CD8-positive, alpha-beta T cell (primary cell): ENCODE measurements at regions of chr4 and their contacts with region 1.

Region 1: DNA sequence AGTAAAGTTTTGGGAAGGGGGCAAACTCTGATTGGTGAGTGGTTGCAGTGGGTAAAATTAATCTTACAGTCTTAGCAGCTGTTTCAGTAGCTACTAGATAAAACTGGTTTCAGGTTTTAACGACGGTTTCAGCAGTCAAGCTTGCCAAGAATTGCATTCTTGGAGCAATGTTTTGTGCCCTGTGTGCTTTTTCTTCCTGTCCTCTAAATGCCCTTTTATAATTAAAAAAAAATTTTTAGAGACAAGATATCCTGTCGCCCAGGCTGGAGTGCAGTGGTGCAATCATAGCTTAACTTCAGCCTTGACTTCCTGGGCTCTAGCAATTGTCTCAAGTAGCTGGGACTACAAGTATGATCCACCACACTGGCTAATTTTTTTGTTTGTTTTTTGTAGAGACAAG is 6.3 kb upstream of the PPEF2 start:
- DNase-seq: no peak
- ATAC-seq: no peak
- H3K4me3 ChIP-seq: no peak overlapping the region
- H3K4me3 Mint-ChIP-seq: no peak overlapping the region
- H3K27ac ChIP-seq: no peak overlapping the region
- H3K27ac Mint-ChIP-seq: no peak overlapping the region
- H3K4me1 ChIP-seq: no peaks in the 10 kb centered on the region
- H3K4me1 Mint-ChIP-seq: no peaks in the 10 kb centered on the region
- H3K27me3 ChIP-seq: no peaks in the 10 kb centered on the region
- H3K27me3 Mint-ChIP-seq: no peaks in the 10 kb centered on the region
- CTCF ChIP-seq: no peak

Region 2: GRCh38 chr4:75895744-75896314 is 12.7 kb before region 1 on chr4:
- CTCF ChIA-PET with region 1: interaction called, 14 read pairs
- POLR2A ChIA-PET with region 1: no interaction called
- intact Hi-C with region 1: no loop called
- DNase-seq: peak in 2 of 9 experiments; percentile 57 to 68
- ATAC-seq: peak; percentile 49
- H3K4me3 ChIP-seq: no peak overlapping the region
- H3K4me3 Mint-ChIP-seq: no peak overlapping the region
- H3K27ac ChIP-seq: no peak overlapping the region
- H3K27ac Mint-ChIP-seq: no peak overlapping the region
- H3K4me1 ChIP-seq: no peaks in the 10 kb centered on the region
- H3K4me1 Mint-ChIP-seq: no peaks in the 10 kb centered on the region
- H3K27me3 ChIP-seq: no peaks in the 10 kb centered on the region
- H3K27me3 Mint-ChIP-seq: no peaks in the 10 kb centered on the region
- CTCF ChIP-seq: peak; percentile 72

Region 3: DNA sequence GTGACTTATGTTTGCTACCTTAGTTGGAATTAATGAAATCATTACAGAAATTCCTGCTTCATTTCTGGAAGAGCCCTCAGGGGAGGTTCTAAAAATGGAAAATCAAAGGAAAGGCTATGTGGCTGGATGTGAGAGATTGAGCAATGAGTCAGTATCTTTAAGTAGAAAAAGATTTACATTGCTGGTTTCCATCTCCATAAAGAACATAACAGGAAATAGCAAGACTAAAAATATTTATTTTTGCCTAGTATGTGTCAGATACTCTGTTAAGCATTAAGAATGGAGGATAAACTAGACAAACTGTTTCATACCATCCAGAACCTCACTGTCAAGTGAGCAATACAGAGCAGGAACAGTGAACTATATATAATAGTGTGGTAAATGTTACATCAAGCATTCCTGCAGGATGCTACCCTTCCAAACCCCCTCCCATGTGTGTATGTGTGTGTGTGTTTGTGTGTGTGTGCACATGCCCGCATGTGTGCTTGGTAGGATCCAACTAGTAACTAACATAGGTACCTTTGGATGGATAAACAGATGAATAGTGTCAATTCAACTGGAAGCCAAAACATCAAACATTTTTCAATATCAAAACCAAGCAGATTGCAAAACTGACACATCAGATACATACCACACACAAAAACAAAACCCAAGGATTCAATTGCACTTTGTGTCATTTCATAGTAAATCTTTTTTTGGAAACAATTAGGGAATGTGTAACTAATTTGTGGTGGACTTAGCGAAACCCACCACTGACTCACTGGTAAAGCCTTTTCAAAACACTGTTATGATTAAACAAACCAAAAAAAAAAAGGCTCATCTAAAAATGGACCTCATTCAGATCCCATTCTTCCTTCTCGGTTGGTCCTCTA is 749.9 kb after region 1 on chr4:
- CTCF ChIA-PET with region 1: no interaction called
- POLR2A ChIA-PET with region 1: no interaction called
- intact Hi-C with region 1: no loop called
- DNase-seq: no peak
- ATAC-seq: no peak
- H3K4me3 ChIP-seq: no peak overlapping the region
- H3K4me3 Mint-ChIP-seq: no peak overlapping the region
- H3K27ac ChIP-seq: no peak overlapping the region
- H3K27ac Mint-ChIP-seq: no peak overlapping the region
- H3K4me1 ChIP-seq: no peaks in the 10 kb centered on the region
- H3K4me1 Mint-ChIP-seq: no peaks in the 10 kb centered on the region
- H3K27me3 ChIP-seq: no peaks in the 10 kb centered on the region
- H3K27me3 Mint-ChIP-seq: peaks cover 2% of the 10 kb centered on the region
- CTCF ChIP-seq: no peak